AG04449 (cell line): ENCODE measurements at regions of chr19 and their contacts with region 1.

Region 1: GRCh38 chr19:35882114-35882832 is 13.9 kb downstream of the APLP1 start:
- DNase-seq: peak; percentile 54
- H3K4me3 ChIP-seq: no peak overlapping the region
- CTCF ChIP-seq: peak; percentile 43

Region 2: DNA sequence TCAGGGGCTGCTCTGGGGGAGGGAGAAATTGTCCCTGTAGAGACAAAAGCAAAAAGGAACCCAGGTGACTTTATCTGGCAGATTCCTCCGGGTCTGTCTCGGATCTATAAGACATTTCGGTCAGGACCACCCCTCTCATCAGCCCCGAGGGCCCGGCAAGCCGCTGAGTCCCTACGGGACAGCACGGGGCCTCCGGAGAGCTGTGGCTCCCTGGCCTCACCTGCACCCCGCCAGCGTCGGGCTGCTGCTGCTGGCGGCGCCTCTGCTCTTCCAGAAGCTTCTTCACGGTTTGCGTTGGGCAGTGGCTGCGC is 16.2 kb after region 1 on chr19:
- CTCF ChIA-PET with region 1: interaction called, 34 read pairs
- POLR2A ChIA-PET with region 1: interaction called, 3 read pairs
- DNase-seq: no peak
- H3K4me3 ChIP-seq: peak overlapping the region; percentile 71
- CTCF ChIP-seq: no peak

Region 3: DNA sequence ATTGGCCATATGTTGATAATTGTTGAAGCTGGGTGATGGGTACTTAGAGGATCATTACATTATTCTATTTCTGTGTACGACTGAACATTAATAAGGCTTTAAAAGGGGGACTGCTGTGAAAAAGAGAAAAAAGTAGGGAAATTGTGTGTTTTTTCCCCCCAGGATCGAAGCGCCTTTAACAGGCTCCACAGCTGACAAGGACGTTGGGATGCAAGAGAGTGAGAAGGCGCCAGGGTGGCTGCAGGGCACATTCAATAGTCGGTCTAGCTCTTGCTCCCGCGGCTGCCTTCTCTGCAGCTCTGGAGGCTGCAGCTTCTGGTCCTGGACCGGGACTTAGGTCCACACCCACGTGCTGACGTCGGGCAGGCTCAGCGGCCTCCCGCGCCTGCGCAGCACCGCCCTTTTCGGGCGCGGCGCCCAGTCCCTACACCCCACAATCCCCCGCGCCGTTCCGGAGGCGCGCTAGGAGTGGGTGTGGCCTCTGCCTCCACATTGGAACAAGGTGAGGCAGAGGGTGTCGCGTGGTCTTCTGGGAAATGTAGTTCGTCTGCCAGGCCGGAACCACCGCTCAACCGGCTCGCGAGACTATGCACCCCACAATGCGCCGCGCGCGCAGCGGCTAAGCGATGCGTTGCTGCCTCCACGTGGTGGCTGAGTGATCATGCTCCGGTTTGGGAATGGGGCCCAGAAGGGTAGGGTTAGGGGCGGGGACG is 49.0 kb after region 1 on chr19:
- CTCF ChIA-PET with region 1: interaction called, 144 read pairs
- POLR2A ChIA-PET with region 1: interaction called, 8 read pairs
- DNase-seq: peak; percentile 96
- H3K4me3 ChIP-seq: peak overlapping the region; percentile 52
- CTCF ChIP-seq: peak; percentile 97